ENCODE measurements at regions of chr20 and their contacts with region 1.

Region 1: GRCh38 chr20:31951530-31952453 is at the start of gene PDRG1:
- DNase-seq: peak; percentile 95
- H3K4me3 ChIP-seq: peak within 1 kb of the TSS; percentile 90 to 97
- H3K27ac ChIP-seq: peak within 1 kb of the TSS; percentile 55 to 84
- H3K4me1 ChIP-seq: peaks cover 12% of the 10 kb centered on the region
- H3K27me3 ChIP-seq: no peaks in the 10 kb centered on the region
- CTCF ChIP-seq: peak; percentile 89 to 97 (median 97)
- POLR2A ChIP-seq: no peak
- total RNA-seq, gene PDRG1: 27.0 to 37.5 TPM

Region 2: GRCh38 chr20:31822421-31823330 is 129.1 kb before region 1 on chr20:
- intact Hi-C with region 1: loop called (anchors 10 kb)
- DNase-seq: peak; percentile 85
- H3K4me3 ChIP-seq: no peak overlapping the region
- H3K27ac ChIP-seq: no peak overlapping the region
- H3K4me1 ChIP-seq: peaks cover 10% of the 10 kb centered on the region
- H3K27me3 ChIP-seq: no peaks in the 10 kb centered on the region
- CTCF ChIP-seq: peak; percentile 98 to 100 (median 99)
- POLR2A ChIP-seq: no peak

Region 3: DNA sequence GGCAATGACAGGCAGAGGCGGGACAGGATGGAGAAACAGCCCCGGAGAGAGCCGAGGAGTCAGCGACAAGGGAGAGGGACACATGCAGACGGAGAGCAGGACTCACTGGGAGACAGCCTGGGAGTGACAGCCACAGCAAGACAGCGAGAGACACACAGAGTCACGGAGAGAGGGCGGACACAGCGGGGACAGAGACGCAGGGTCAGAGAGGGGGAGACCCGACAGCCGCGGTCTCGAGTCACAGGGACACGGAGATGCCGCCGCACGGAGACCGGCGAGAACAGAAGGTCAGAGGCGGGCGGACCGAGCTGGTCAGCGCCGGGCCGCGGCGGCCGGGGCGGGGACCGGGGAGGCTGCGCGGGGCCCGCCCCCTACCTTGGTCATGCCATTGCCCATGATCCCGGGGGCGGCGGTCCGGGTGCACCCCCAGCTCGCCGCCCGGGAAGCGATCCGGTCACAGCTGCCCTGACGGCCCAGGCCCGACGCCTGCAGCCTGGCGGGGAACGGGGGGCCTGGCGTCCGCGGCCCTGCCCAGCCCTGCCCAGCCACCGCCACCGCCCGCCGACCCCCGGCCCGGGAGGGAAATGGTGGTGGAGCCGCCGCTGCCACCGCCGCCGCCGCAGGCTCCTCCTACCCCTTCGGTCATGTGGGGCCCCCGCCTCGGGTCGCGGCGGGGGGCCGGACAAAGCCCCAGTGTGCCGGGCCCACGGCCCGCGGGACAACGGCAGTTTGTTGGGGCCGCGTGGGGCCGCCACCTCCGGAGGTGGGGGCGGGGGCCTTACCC is 81.7 kb before region 1 on chr20 and contains the starts of genes DUSP15 and TTLL9:
- intact Hi-C with region 1: loop called (anchors 5 kb)
- DNase-seq: peak; percentile 72
- H3K4me3 ChIP-seq: peak within 1 kb of the TSS; percentile 72 to 81
- H3K27ac ChIP-seq: peak within 1 kb of the TSS; percentile 40 to 84
- H3K4me1 ChIP-seq: peaks cover 23% of the 10 kb centered on the region
- H3K27me3 ChIP-seq: no peaks in the 10 kb centered on the region
- CTCF ChIP-seq: no peak
- POLR2A ChIP-seq: no peak
- total RNA-seq, gene DUSP15: 175 to 274 TPM
- total RNA-seq, gene TTLL9: 8.7 to 19.1 TPM

Measured in testis (tissue), 5 donors.